ENCODE measurements at regions of chr19 and their contacts with region 1.

Region 1: DNA sequence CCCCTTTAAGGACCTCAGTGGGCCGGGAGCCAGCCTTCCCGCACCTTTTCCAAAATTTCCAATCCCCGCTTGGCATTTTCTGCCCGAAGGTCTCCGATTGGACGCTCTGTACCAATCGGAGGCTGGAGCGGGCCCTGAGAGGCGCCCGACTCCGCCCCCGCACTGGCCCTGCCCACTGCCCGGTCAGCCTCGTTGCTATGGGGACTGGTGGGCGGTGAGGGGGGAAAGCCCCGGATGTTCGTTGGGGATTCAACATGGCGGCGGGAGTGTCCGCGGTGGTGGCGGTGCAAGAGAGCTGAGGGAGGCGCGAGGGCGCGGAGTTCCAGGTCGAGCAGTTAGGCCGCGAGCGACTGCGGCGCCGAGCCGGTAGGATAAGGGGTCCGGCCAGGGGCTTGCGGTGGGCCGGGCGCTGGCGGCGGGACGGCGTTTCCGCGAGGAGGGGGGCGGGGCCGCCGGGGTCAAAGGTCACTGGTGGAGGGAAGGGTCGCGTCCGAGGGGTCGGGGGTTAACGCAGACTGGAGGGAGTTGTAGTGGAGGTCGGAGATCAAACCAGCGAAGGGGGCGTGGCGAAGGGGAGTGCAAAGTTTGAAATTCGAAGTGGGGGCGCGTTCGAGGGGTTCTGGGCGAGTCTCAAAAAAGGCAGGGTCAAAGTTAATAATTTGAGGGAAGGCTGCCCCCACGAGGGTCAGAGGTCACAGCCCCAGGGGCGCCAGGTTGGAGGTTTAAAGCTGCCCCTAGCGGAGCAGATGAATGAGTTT is at the start of gene PAK4:
- DNase-seq: peak; percentile 99 to 100
- ATAC-seq: peak; percentile 81 to 89
- H3K4me3 ChIP-seq: peak within 1 kb of the TSS; percentile 84
- H3K27ac ChIP-seq: peak within 1 kb of the TSS; percentile 92 to 94
- H3K4me1 ChIP-seq: peaks cover 61% of the 10 kb centered on the region
- CTCF ChIP-seq: no peak
- EP300 ChIP-seq: no peak
- POLR2A ChIP-seq: peak; percentile 95
- RAD21 ChIP-seq: peak in 1 of 2 experiments; percentile 23; a peak in 1 of 5 replicates
- polyA plus RNA-seq, gene PAK4: 37.9 and 42.9 TPM in 2 replicates

Region 2: DNA sequence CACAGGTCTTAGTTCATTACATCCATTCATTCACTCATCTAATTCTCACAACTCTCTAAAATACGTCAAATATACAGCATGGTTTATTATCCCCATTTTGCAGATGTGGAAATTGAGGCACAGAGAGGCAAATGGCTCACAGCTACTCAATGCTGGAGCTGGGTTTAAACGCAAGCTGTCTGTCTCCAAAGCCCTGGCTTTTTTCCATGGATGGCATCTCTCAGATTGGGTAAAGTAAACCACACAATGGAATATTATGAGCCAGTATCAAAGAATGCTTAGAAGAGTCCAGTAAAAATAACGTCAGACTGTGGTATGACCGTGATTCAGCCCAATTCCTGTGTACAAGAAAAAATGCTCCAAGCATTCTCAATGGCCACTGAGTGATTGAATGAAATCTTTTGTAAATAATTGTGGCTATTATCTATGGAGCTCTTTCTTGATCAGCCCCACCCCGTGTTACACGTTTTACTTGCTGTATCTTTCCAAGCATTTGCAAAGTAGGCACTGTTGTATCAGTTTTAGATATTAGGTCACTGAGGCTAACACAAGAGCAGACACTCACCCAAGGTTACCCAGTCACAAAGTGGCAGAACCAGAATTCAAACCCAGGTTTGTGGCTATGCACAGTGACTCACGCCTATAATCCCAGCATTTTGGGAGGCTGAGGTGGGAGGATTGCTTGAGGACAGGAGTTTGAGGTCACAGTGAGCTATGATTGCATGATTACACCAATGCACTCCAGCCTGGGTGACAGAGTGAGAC is 47.1 kb before region 1 on chr19:
- CTCF ChIA-PET with region 1: interaction called, 11 read pairs
- POLR2A ChIA-PET with region 1: no interaction called
- DNase-seq: peak; percentile 94 to 96
- ATAC-seq: peak; percentile 83 to 86
- H3K4me3 ChIP-seq: no peak overlapping the region
- H3K27ac ChIP-seq: peak overlapping the region; percentile 84 to 86
- H3K4me1 ChIP-seq: peaks cover 56% of the 10 kb centered on the region
- CTCF ChIP-seq: no peak
- EP300 ChIP-seq: peak; percentile 95 to 97; a peak in 4 of 5 replicates
- POLR2A ChIP-seq: no peak
- RAD21 ChIP-seq: no peak; a peak in 1 of 5 replicates

Region 3: GRCh38 chr19:39144245-39145071 is 18.7 kb after region 1 on chr19:
- CTCF ChIA-PET with region 1: interaction called, 22 read pairs
- POLR2A ChIA-PET with region 1: no interaction called
- DNase-seq: no peak
- ATAC-seq: peak; percentile 45 to 65
- H3K4me3 ChIP-seq: no peak overlapping the region
- H3K27ac ChIP-seq: peak overlapping the region in 1 of 2 experiments; percentile 53; a peak in 3 of 6 replicates
- H3K4me1 ChIP-seq: peaks cover 30% of the 10 kb centered on the region
- CTCF ChIP-seq: no peak
- EP300 ChIP-seq: no peak
- POLR2A ChIP-seq: no peak
- RAD21 ChIP-seq: no peak

Region 4: DNA sequence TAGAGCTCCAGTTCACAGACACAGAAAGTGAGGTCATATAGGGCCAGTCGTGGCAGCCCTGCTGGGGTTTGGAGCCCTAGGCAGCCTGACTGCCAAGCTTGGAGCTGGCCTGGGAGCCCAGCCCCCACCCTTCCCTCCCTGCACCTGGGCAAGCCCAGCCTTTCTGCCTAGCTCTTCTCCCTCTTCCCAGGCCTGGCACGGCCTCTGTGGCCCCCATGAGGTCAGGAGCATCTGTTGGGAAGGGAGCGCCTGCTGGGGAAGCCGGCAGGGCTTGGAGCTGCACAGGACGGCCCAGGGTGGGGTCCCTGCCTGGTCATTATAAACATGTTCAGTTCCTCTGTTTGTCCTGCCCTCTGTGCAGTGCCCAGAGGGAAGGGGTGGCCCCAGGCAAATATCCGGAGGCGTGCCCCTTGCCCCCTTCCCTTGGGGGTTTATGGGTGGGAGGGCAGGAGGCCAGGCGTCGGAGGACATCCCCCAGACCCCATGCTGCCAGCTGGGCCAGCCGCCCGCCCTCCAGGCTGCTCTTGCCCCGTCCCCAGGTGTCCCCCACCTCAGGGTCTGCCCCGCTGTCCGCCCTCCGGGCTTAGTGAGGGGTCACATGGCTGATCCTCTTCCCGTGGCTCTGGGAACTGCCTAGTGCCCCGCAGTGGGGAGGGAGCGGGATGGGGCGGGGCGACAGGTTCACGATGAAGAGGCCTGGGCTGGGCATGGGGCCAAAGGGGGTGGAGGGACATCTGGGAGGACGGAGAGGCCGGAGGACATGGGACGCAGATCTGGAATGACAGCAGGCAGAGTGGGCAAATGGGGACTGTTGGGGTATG is 41.0 kb after region 1 on chr19:
- CTCF ChIA-PET with region 1: interaction called, 10 read pairs
- POLR2A ChIA-PET with region 1: no interaction called
- DNase-seq: no peak
- ATAC-seq: peak; percentile 17 to 37; a peak in 4 of 6 replicates
- H3K4me3 ChIP-seq: no peak overlapping the region
- H3K27ac ChIP-seq: peak overlapping the region in 1 of 2 experiments; percentile 22; a peak in 2 of 6 replicates
- H3K4me1 ChIP-seq: peaks cover 15% of the 10 kb centered on the region
- CTCF ChIP-seq: no peak
- EP300 ChIP-seq: no peak
- POLR2A ChIP-seq: no peak
- RAD21 ChIP-seq: no peak

Region 5: GRCh38 chr19:39187559-39187957 is 61.8 kb after region 1 on chr19:
- CTCF ChIA-PET with region 1: interaction called, 27 read pairs
- POLR2A ChIA-PET with region 1: no interaction called
- DNase-seq: no peak
- ATAC-seq: peak; percentile 35 to 45
- H3K4me3 ChIP-seq: no peak overlapping the region
- H3K27ac ChIP-seq: peak overlapping the region in 1 of 2 experiments; percentile 31; a peak in 3 of 6 replicates
- H3K4me1 ChIP-seq: peaks cover 11% of the 10 kb centered on the region; the same call in 2 of the 3 replicates
- CTCF ChIP-seq: peak; percentile 21; the same call in 2 of the 3 replicates
- EP300 ChIP-seq: no peak
- POLR2A ChIP-seq: peak; percentile 9; the same call in 1 of the 2 replicates
- RAD21 ChIP-seq: no peak; a peak in 1 of 5 replicates

Measured in A549 (cell line).